ENCODE measurements at regions of chr4 and their contacts with region 1.

Region 1: GRCh38 chr4:83535520-83536361 is at the start of gene GPAT3:
- DNase-seq: peak; percentile 64
- ATAC-seq: peak; percentile 81
- H3K4me3 ChIP-seq: peak within 1 kb of the TSS; percentile 47 to 76 (median 68)
- H3K4me3 Mint-ChIP-seq: peak within 1 kb of the TSS; percentile 90
- H3K27ac ChIP-seq: no peak within 1 kb of the TSS
- H3K27ac Mint-ChIP-seq: peak within 1 kb of the TSS; percentile 57
- H3K4me1 ChIP-seq: peaks cover 14 to 18% of the 10 kb centered on the region in 2 donors
- H3K4me1 Mint-ChIP-seq: peaks cover 20% of the 10 kb centered on the region
- H3K27me3 ChIP-seq: peaks cover 0 to 34% (median 18%) of the 10 kb centered on the region in 4 experiments
- H3K27me3 Mint-ChIP-seq: peaks cover 38% of the 10 kb centered on the region
- CTCF ChIP-seq: no peak
- total RNA-seq, gene GPAT3: 0.89 and 1.0 TPM in 2 replicates

Region 2: GRCh38 chr4:83498187-83498586 is 37.6 kb before region 1 on chr4:
- CTCF ChIA-PET with region 1: no interaction called
- POLR2A ChIA-PET with region 1: no interaction called
- intact Hi-C with region 1: loop called (anchors 5 kb)
- DNase-seq: no peak
- ATAC-seq: no peak
- H3K4me3 ChIP-seq: no peak overlapping the region
- H3K4me3 Mint-ChIP-seq: no peak overlapping the region
- H3K27ac ChIP-seq: no peak overlapping the region
- H3K27ac Mint-ChIP-seq: no peak overlapping the region
- H3K4me1 ChIP-seq: no peaks in the 10 kb centered on the region
- H3K4me1 Mint-ChIP-seq: no peaks in the 10 kb centered on the region
- H3K27me3 ChIP-seq: no peaks in the 10 kb centered on the region
- H3K27me3 Mint-ChIP-seq: no peaks in the 10 kb centered on the region
- CTCF ChIP-seq: no peak